ENCODE measurements at regions of chr5 and their contacts with region 1.

Region 1: GRCh38 chr5:123423278-123424149 is at the start of gene CEP120:
- DNase-seq: peak; percentile 95 to 100 (median 97)
- ATAC-seq: peak; percentile 91
- H3K4me3 ChIP-seq: peak within 1 kb of the TSS; percentile 67 to 79
- H3K4me3 Mint-ChIP-seq: no peak within 1 kb of the TSS
- H3K27ac ChIP-seq: peak within 1 kb of the TSS; percentile 98
- H3K27ac Mint-ChIP-seq: no peak within 1 kb of the TSS
- H3K4me1 ChIP-seq: peaks cover 32% of the 10 kb centered on the region
- H3K4me1 Mint-ChIP-seq: peaks cover 17% of the 10 kb centered on the region
- H3K27me3 ChIP-seq: no peaks in the 10 kb centered on the region
- H3K27me3 Mint-ChIP-seq: no peaks in the 10 kb centered on the region
- CTCF ChIP-seq: peak; percentile 67
- total RNA-seq, gene CEP120: 63.6 to 69.1 TPM

Region 2: GRCh38 chr5:122774861-122775549 is 648.5 kb before region 1 on chr5 and contains the start of gene SNX2:
- CTCF ChIA-PET with region 1: no interaction called
- POLR2A ChIA-PET with region 1: interaction called, 23 read pairs
- intact Hi-C with region 1: loop called (anchors 1 to 2 kb)
- DNase-seq: peak; percentile 77 to 94 (median 89)
- ATAC-seq: peak; percentile 85
- H3K4me3 ChIP-seq: peak within 1 kb of the TSS; percentile 72 to 89
- H3K4me3 Mint-ChIP-seq: peak within 1 kb of the TSS; percentile 93
- H3K27ac ChIP-seq: peak within 1 kb of the TSS; percentile 83 to 87
- H3K27ac Mint-ChIP-seq: peak within 1 kb of the TSS; percentile 95
- H3K4me1 ChIP-seq: peaks cover 34% of the 10 kb centered on the region
- H3K4me1 Mint-ChIP-seq: peaks cover 51% of the 10 kb centered on the region
- H3K27me3 ChIP-seq: no peaks in the 10 kb centered on the region
- H3K27me3 Mint-ChIP-seq: peaks cover 4% of the 10 kb centered on the region
- CTCF ChIP-seq: peak; percentile 44
- total RNA-seq, gene SNX2: 68.6 to 76.3 TPM

Region 3: DNA sequence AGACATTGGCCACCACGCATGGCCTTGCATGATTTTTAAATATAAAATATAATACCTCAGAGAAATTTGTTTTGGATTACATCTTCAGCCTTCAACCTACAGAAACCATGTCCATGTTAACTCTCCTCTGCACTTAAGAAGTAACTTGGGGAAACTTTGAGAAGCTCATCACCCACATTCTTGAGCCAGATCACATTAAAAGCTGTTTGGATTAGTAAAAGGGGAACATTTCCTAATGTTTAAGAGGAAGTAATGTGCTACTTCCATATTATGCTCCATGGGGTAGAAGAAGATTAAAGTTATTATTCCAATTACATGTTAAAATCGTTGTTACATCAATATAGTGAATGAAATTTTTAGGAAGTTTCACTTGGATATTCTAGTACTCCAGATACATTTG is 10.1 kb after region 1 on chr5:
- CTCF ChIA-PET with region 1: interaction called, 5 read pairs
- POLR2A ChIA-PET with region 1: interaction called, 13 read pairs
- intact Hi-C with region 1: no loop called
- DNase-seq: no peak
- ATAC-seq: no peak
- H3K4me3 ChIP-seq: no peak overlapping the region
- H3K4me3 Mint-ChIP-seq: no peak overlapping the region
- H3K27ac ChIP-seq: no peak overlapping the region
- H3K27ac Mint-ChIP-seq: no peak overlapping the region
- H3K4me1 ChIP-seq: no peaks in the 10 kb centered on the region
- H3K4me1 Mint-ChIP-seq: no peaks in the 10 kb centered on the region
- H3K27me3 ChIP-seq: no peaks in the 10 kb centered on the region
- H3K27me3 Mint-ChIP-seq: peaks cover 6% of the 10 kb centered on the region
- CTCF ChIP-seq: no peak

Region 4: DNA sequence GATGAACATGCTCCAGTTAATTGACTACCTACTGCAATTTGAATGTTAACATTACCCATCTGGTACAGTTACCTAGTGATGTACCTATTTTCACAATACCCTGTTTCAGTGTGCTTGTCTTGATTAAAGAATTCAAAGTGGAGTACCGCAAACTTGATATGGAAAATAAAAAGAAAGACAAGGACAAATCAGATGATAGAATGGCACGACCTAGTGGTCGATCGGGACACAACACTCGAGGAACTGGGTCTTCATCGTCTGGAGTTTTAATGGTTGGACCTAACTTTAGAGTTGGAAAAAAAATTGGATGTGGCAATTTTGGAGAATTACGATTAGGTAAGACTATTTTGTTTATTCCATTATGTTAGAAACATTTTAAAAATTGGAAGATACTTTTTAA is 122.0 kb after region 1 on chr5:
- CTCF ChIA-PET with region 1: interaction called, 20 read pairs
- POLR2A ChIA-PET with region 1: interaction called, 20 read pairs
- intact Hi-C with region 1: loop called (anchors 2 kb)
- DNase-seq: peak in 4 of 9 experiments; percentile 25 to 61 (median 34)
- ATAC-seq: no peak
- H3K4me3 ChIP-seq: no peak overlapping the region
- H3K4me3 Mint-ChIP-seq: no peak overlapping the region
- H3K27ac ChIP-seq: no peak overlapping the region
- H3K27ac Mint-ChIP-seq: no peak overlapping the region
- H3K4me1 ChIP-seq: peaks cover 22% of the 10 kb centered on the region
- H3K4me1 Mint-ChIP-seq: peaks cover 61% of the 10 kb centered on the region
- H3K27me3 ChIP-seq: no peaks in the 10 kb centered on the region
- H3K27me3 Mint-ChIP-seq: no peaks in the 10 kb centered on the region
- CTCF ChIP-seq: peak; percentile 54

Region 5: DNA sequence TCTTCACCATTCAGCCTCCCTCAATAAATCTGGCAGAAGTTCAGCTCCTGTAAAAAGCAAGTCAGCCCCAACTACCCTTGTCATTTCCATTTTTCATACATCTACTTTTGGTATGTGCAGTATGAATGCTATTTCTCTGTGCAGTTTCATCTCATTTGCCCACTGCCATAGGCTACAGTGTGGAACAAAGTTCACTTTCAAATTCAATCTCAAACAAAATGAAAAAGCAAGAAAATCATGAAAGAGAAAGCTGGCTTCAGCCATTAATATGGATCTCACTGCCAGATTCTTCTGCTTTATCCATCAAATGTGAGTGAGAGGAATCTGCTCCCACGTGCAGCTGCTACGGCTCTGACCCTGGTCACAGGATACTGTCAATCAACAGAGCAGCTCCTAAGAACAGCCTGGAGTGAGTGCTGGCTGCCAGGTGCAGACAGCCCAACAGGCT is 828.7 kb after region 1 on chr5:
- CTCF ChIA-PET with region 1: no interaction called
- POLR2A ChIA-PET with region 1: no interaction called
- intact Hi-C with region 1: no loop called
- DNase-seq: no peak
- ATAC-seq: no peak
- H3K4me3 ChIP-seq: no peak overlapping the region
- H3K4me3 Mint-ChIP-seq: no peak overlapping the region
- H3K27ac ChIP-seq: no peak overlapping the region
- H3K27ac Mint-ChIP-seq: no peak overlapping the region
- H3K4me1 ChIP-seq: no peaks in the 10 kb centered on the region
- H3K4me1 Mint-ChIP-seq: no peaks in the 10 kb centered on the region
- H3K27me3 ChIP-seq: no peaks in the 10 kb centered on the region
- H3K27me3 Mint-ChIP-seq: no peaks in the 10 kb centered on the region
- CTCF ChIP-seq: no peak